CD4-positive, alpha-beta memory T cell (primary cell): ENCODE measurements at regions of chr19 and their contacts with region 1.

Region 1: GRCh38 chr19:56403764-56404704 is at the start of gene ZNF583:
- DNase-seq: peak; percentile 90 to 94 (median 92)
- H3K4me3 ChIP-seq: peak within 1 kb of the TSS; percentile 77 to 96
- H3K4me3 Mint-ChIP-seq: peak within 1 kb of the TSS; percentile 93 to 99 (median 97)
- H3K27ac ChIP-seq: peak within 1 kb of the TSS; percentile 92
- H3K27ac Mint-ChIP-seq: peak within 1 kb of the TSS; percentile 88 to 99 (median 98)
- H3K4me1 ChIP-seq: peaks cover 21% of the 10 kb centered on the region
- H3K4me1 Mint-ChIP-seq: peaks cover 20 to 36% (median 26%) of the 10 kb centered on the region in 4 donors
- H3K27me3 ChIP-seq: no peaks in the 10 kb centered on the region
- H3K27me3 Mint-ChIP-seq: no peaks in the 10 kb centered on the region
- total RNA-seq, gene ZNF583: 9.2 to 14.4 TPM

Region 2: DNA sequence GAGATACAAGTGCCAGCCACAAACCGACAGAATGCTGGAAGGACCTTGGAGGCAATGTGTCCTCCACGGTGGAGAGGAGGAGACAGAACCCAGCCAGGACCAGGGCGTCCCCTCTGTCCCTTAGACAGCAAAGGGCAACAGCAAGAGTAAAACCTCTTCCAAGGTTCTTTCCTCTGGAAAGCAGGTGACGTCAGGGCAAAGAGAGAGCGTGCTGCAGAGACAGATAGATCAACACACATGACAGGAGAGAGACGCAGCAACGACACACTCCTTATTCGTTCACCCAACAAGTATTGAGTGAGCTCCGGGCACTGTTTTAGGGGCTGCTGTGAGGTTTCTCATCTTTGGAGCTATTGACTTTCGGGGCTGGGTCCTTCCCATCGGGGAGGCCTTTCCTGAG is 229.5 kb before region 1 on chr19:
- CTCF ChIA-PET with region 1: no interaction called
- POLR2A ChIA-PET with region 1: no interaction called
- intact Hi-C with region 1: no loop called
- DNase-seq: no peak
- H3K4me3 ChIP-seq: no peak overlapping the region
- H3K4me3 Mint-ChIP-seq: no peak overlapping the region
- H3K27ac ChIP-seq: no peak overlapping the region
- H3K27ac Mint-ChIP-seq: no peak overlapping the region
- H3K4me1 ChIP-seq: no peaks in the 10 kb centered on the region
- H3K4me1 Mint-ChIP-seq: peaks cover 0 to 5% (median 3%) of the 10 kb centered on the region in 4 donors
- H3K27me3 ChIP-seq: no peaks in the 10 kb centered on the region
- H3K27me3 Mint-ChIP-seq: peaks cover 11 to 13% of the 10 kb centered on the region in 2 donors

Region 3: DNA sequence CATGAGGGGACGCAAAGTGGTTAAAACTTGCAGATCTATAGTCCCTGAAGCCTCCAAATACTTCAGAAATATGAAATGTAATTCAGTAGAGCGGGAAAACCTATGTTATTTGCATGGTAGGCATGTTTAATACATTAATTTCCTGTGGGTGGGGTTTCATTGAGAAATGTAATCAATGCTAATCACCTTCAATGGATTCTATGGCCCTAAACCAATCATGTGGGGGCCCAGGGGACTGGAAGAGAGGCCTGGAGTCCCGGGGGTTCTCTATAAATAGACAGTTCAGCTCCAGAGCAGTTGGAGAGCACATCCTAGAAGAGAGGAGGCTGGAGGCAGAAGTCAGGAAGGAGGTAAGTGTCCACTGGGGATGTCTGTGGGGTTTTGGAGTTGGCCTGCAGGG is 202.1 kb before region 1 on chr19 and contains the start of gene ZSCAN5C:
- CTCF ChIA-PET with region 1: no interaction called
- POLR2A ChIA-PET with region 1: no interaction called
- intact Hi-C with region 1: no loop called
- DNase-seq: no peak
- H3K4me3 ChIP-seq: no peak within 1 kb of the TSS
- H3K4me3 Mint-ChIP-seq: no peak within 1 kb of the TSS
- H3K27ac ChIP-seq: no peak within 1 kb of the TSS
- H3K27ac Mint-ChIP-seq: no peak within 1 kb of the TSS
- H3K4me1 ChIP-seq: no peaks in the 10 kb centered on the region
- H3K4me1 Mint-ChIP-seq: no peaks in the 10 kb centered on the region
- H3K27me3 ChIP-seq: no peaks in the 10 kb centered on the region
- H3K27me3 Mint-ChIP-seq: peaks cover 4 to 12% of the 10 kb centered on the region in 2 donors
- total RNA-seq, gene ZSCAN5C: not detected

Region 4: GRCh38 chr19:56350416-56351045 is 53.5 kb before region 1 on chr19:
- CTCF ChIA-PET with region 1: no interaction called
- POLR2A ChIA-PET with region 1: no interaction called
- intact Hi-C with region 1: no loop called
- DNase-seq: peak; percentile 35 to 57 (median 46)
- H3K4me3 ChIP-seq: no peak overlapping the region
- H3K4me3 Mint-ChIP-seq: no peak overlapping the region
- H3K27ac ChIP-seq: no peak overlapping the region
- H3K27ac Mint-ChIP-seq: no peak overlapping the region
- H3K4me1 ChIP-seq: no peaks in the 10 kb centered on the region
- H3K4me1 Mint-ChIP-seq: peaks cover 0 to 1% (median 0%) of the 10 kb centered on the region in 4 donors
- H3K27me3 ChIP-seq: no peaks in the 10 kb centered on the region
- H3K27me3 Mint-ChIP-seq: peaks cover 1% of the 10 kb centered on the region in 2 donors

Region 5: GRCh38 chr19:56567274-56568120 is 163.5 kb after region 1 on chr19 and contains the start of gene ZNF470:
- CTCF ChIA-PET with region 1: no interaction called
- POLR2A ChIA-PET with region 1: no interaction called
- intact Hi-C with region 1: loop called (anchors 5 kb)
- DNase-seq: peak; percentile 81 to 86 (median 82)
- H3K4me3 ChIP-seq: peak within 1 kb of the TSS; percentile 58 to 96
- H3K4me3 Mint-ChIP-seq: peak within 1 kb of the TSS; percentile 90 to 99 (median 94)
- H3K27ac ChIP-seq: peak within 1 kb of the TSS; percentile 59
- H3K27ac Mint-ChIP-seq: peak within 1 kb of the TSS; percentile 60 to 94 (median 87)
- H3K4me1 ChIP-seq: peaks cover 13% of the 10 kb centered on the region
- H3K4me1 Mint-ChIP-seq: peaks cover 8 to 23% (median 14%) of the 10 kb centered on the region in 4 donors
- H3K27me3 ChIP-seq: no peaks in the 10 kb centered on the region
- H3K27me3 Mint-ChIP-seq: no peaks in the 10 kb centered on the region
- total RNA-seq, gene ZNF470: 4.9 to 5.0 TPM